ENCODE measurements at regions of chr18 and their contacts with region 1.

Region 1: DNA sequence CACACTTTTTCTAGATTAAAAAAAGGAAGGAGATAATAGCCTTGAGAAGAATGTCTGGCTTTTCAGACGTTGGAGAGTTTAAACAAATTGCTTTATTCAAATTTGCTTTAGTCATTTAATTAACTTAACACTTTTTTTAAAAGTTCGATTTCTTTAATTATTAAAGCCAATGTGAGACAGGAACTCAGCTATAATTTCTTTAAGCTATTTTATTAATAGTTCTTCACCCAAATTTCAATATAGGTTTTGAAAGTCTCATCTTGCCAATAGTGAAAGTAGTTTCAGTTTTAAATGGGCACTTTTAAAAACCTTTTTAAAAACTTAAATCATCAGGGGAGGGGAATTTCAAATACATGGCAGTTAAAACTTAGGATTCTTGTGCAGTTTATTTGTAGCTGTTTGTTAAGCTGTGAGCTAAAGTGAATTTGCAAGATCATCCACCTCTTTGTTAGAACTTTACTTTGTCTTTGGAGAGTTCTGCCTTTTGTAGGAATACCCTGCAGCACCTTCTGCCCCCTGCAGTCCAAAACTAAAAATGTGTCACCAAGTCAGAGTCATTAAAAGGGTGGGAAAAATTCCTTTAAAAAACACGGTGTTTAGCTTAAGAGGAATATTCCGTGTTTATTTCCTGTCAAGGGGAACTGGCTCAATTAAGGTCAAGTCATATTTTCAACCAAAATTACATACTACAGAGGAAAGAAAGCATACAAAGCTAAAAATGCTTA is 4.6 kb downstream of the TGIF1 start:
- DNase-seq: peak; percentile 62
- H3K4me3 Mint-ChIP-seq: peak overlapping the region; percentile 92
- H3K27ac Mint-ChIP-seq: peak overlapping the region; percentile 95
- H3K4me1 Mint-ChIP-seq: peaks cover 37% of the 10 kb centered on the region
- H3K27me3 Mint-ChIP-seq: no peaks in the 10 kb centered on the region
- CTCF ChIP-seq: peak; percentile 71

Region 2: GRCh38 chr18:3297025-3297984 is 157.2 kb before region 1 on chr18:
- CTCF ChIA-PET with region 1: interaction called, 10 read pairs
- intact Hi-C with region 1: no loop called
- DNase-seq: peak; percentile 94
- H3K4me3 Mint-ChIP-seq: peak overlapping the region; percentile 91
- H3K27ac Mint-ChIP-seq: peak overlapping the region; percentile 77
- H3K4me1 Mint-ChIP-seq: peaks cover 8% of the 10 kb centered on the region
- H3K27me3 Mint-ChIP-seq: peaks cover 16% of the 10 kb centered on the region
- CTCF ChIP-seq: peak; percentile 50

Region 3: GRCh38 chr18:3541549-3542386 is 87.2 kb after region 1 on chr18:
- CTCF ChIA-PET with region 1: no interaction called
- intact Hi-C with region 1: loop called (anchors 2 kb)
- DNase-seq: peak; percentile 21
- H3K4me3 Mint-ChIP-seq: peak overlapping the region; percentile 38
- H3K27ac Mint-ChIP-seq: peak overlapping the region; percentile 81
- H3K4me1 Mint-ChIP-seq: peaks cover 43% of the 10 kb centered on the region
- H3K27me3 Mint-ChIP-seq: no peaks in the 10 kb centered on the region
- CTCF ChIP-seq: no peak

Region 4: DNA sequence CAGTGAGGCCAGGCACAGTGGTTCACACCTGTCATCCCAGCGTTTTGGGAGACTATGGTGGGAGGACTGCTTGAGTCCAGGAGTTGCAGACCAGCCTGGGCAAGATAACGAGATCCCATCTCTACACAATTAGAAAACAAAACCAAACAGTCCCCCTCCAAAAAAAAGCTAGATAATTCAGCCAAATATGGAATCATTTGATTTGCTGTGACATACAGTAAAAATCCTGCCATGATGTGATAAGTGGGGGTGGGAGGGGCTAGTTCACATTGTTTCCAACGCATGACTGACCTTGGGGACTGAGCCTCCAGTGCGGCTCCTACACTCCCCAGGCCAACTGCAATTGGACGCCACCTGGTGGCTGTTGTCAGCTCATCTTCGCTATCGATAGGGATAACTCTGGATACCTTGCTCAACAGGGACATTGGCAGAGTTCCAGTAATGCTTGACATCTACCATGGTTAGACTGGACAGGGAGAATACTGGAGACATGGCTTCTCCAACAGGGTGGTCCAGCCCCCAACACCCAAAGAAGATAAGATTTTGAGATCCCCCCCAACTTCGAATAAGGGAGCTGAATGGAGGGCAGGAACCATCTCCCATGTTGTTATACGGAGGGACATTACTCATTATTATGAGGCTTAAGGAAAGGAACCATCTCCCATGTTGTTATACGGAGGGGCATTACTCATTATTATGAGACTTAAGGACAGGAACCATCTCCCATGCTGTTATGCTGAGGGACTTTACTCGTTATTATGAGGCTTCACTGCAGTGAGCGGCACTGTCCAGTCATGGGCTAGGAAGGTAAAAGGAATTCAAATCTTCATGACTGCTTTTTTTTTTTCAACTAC is 131.4 kb after region 1 on chr18:
- CTCF ChIA-PET with region 1: interaction called, 12 read pairs
- intact Hi-C with region 1: loop called (anchors 2 kb)
- DNase-seq: peak; percentile 91
- H3K4me3 Mint-ChIP-seq: no peak overlapping the region
- H3K27ac Mint-ChIP-seq: peak overlapping the region; percentile 73
- H3K4me1 Mint-ChIP-seq: peaks cover 34% of the 10 kb centered on the region
- H3K27me3 Mint-ChIP-seq: no peaks in the 10 kb centered on the region
- CTCF ChIP-seq: peak; percentile 89

Region 5: GRCh38 chr18:3665780-3666525 is 211.4 kb after region 1 on chr18:
- CTCF ChIA-PET with region 1: interaction called, 24 read pairs
- intact Hi-C with region 1: loop called (anchors 2 kb)
- DNase-seq: peak; percentile 88
- H3K4me3 Mint-ChIP-seq: peak overlapping the region; percentile 55
- H3K27ac Mint-ChIP-seq: peak overlapping the region; percentile 83
- H3K4me1 Mint-ChIP-seq: peaks cover 40% of the 10 kb centered on the region
- H3K27me3 Mint-ChIP-seq: no peaks in the 10 kb centered on the region
- CTCF ChIP-seq: peak; percentile 93

Region 6: GRCh38 chr18:4720518-4720917 is 1266.0 kb after region 1 on chr18:
- CTCF ChIA-PET with region 1: no interaction called
- intact Hi-C with region 1: no loop called
- DNase-seq: no peak
- H3K4me3 Mint-ChIP-seq: no peak overlapping the region
- H3K27ac Mint-ChIP-seq: no peak overlapping the region
- H3K4me1 Mint-ChIP-seq: no peaks in the 10 kb centered on the region
- H3K27me3 Mint-ChIP-seq: no peaks in the 10 kb centered on the region
- CTCF ChIP-seq: no peak

Measured in Calu3 (cell line).